ENCODE measurements at regions of chr17 and their contacts with region 1.

Region 1: DNA sequence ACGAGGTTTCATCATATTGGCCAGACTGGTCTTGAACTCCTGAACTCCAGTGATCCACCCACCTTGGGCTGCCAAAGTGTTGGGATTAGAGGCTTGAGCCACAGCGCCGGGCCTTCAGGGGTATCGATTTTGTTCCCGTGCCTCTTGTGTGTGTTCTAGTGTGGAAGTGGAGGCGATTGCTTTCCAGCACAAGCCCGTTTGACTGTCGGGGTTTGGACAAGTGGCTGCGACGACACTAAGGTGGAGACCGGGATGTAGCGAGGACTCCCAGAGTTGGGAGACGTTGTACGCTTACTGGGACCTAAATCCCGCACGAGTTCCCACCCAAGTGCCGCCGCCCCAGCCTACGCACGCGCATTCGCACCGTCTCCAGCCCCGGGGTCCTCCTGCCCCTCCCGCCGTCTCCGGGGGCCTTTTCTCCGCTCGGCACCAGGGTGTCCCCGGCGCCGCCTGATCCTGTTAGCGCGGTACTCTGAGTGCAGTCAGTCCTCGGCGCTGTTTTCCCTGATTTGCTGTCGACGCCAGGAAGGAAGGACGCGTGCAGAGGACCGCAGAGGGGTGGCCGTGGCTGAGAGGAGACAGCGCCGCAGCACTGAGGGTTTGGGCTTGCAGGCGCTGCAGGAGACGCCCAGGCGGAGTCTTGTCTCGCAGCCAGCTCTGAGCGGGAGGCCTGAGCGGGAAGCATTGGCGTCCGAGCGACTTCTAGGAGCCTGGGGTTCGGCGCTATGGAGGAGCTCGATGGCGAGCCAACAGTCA is at the start of gene NUP85:
- DNase-seq: peak; percentile 87 to 99 (median 92)

Region 2: GRCh38 chr17:74961657-74962490 is 243.3 kb before region 1 on chr17:
- intact Hi-C with region 1: loop called (anchors 10 kb)
- DNase-seq: peak; percentile 78 to 98 (median 90)

Region 3: DNA sequence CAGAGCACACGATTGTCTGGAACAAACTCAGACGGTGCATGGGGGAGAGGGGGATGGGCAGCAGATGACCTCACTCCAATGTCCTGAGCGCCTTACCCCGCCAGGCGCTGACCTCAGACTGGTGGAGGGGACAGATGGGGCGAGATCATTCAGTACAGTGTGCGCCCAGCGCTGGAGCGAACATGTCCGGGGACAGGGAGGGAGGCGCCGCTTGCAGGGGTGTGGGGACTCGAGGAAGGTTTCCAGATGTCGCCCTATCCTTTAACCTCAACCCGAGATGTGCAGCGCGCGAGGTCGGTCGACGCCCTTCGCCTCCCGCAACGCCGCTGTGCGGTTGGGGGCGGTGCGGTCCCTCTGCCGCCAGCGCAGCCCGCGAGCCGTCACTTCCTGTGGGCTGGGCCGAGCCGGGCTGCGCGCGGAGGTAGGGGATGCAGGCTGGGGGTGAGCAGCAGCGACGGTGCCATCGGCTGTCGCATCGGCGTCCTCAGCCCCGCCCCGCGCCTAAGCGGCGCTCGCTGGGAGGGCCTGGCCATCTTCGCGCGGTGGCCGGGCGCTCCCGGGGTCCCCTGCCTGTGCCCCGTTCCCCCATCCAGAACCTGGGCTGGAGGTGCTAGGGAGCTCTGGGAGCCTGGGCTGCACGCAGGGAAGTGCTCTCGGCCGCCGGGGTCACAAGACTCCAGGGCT is 223.1 kb before region 1 on chr17:
- intact Hi-C with region 1: no loop called
- DNase-seq: peak; percentile 84 to 98 (median 88)

Region 4: DNA sequence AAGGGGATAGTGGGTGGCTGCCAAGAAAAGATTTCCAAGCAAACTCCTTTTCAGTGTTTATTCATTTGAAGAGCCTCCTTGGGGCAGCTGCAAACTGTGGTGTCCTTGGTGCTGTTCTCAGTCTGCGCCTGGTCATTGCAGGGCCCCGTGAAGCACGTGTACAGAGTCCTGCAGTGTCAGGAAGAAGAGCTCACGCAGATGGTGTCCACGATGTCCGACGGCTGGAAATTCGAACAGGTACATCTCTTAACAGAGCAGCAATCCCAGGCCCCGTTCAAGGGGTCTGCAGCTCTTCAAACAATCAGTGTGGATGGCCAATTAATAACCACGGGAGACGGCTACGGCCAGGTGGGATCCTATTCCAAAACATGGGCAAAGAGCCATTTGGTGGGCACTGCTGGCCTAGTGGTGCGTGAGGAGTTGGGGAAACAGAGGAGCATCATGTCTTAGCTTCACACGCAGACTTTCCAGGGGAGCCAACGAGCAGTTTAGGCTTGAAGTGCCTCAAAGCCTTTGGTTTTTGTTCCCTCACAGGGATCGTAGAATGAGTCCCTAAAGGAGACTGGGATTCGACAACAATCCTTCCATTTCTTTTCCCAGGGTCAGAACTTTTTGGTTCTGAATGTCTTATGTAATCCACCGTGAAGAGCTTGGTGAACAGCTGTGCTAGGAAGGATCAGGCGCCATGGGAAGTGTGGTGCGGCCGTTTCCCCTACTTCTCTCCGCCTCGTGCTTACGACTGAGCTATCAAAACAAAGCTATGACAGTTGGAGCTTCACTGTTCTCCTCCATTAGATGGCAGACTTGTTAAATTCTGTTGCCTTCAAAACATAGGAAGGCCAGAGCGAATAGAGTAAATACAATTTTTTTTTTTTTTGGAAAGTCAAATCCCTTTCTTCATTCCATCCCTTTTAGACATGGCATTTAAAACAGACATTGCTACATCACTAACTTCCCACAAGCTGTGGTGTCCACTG is 145.6 kb before region 1 on chr17:
- intact Hi-C with region 1: loop called (anchors 5 kb)
- DNase-seq: peak in 9 of 10 donors; percentile 31 to 92 (median 44)

Region 5: DNA sequence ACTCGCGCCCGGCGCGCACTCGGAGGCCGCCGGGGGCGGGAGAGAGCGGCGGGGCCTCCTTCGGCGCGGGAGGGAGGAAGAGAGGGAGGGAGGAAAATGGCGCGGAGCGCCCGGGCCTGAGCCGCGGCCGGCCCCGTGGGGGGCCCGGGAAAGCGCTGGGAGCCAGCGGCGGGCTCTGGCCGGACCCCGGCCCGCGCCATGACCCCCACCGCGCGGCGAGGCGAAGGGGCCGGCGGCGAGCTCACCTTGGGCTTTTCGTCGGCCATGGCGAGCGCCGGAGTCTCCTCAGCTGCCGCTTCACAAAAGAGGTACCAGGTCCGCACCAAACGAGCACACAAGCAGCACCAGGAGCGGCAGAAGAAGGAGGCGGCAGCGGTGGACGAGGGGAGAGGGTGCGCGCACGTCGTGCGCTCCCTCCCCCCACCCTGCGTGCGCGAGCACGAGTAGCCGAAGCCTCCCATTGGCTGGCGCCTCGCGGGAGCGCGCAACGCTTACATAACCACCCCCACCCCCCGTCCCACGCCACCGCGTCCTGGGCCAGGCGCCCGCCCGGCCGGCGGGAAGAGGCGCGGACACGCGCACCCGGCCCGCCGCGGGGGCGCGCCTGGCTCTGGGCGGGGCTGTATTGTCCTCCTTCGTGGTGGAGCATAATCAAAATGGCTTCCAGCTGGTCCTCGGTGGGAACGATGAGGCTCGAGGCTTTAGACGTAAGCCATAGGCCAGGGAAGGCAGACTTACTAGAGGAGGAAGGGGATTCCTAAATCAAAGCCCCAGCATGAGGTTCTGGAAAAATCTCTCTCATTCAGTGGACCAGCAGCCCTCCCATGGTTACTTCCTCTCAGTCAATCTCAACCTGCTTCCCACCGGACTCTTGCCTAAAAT is 22.4 kb before region 1 on chr17 and contains the start of gene SUMO2:
- intact Hi-C with region 1: loop called (anchors 2 kb)
- DNase-seq: peak; percentile 81 to 98 (median 87)

Region 6: GRCh38 chr17:75228305-75228704 is 23.1 kb after region 1 on chr17:
- intact Hi-C with region 1: no loop called
- DNase-seq: no peak

Region 7: GRCh38 chr17:75250009-75250471 is 44.8 kb after region 1 on chr17:
- intact Hi-C with region 1: no loop called
- DNase-seq: no peak

Region 8: GRCh38 chr17:75261336-75262111 is 56.3 kb after region 1 on chr17 and contains the starts of genes GGA3 and MRPS7:
- intact Hi-C with region 1: loop called (anchors 10 kb)
- DNase-seq: peak; percentile 92 to 99 (median 96)

Measured in posterior cingulate gyrus (tissue), 11 donors.